ENCODE measurements at regions of chr22 and their contacts with region 1.

Region 1: DNA sequence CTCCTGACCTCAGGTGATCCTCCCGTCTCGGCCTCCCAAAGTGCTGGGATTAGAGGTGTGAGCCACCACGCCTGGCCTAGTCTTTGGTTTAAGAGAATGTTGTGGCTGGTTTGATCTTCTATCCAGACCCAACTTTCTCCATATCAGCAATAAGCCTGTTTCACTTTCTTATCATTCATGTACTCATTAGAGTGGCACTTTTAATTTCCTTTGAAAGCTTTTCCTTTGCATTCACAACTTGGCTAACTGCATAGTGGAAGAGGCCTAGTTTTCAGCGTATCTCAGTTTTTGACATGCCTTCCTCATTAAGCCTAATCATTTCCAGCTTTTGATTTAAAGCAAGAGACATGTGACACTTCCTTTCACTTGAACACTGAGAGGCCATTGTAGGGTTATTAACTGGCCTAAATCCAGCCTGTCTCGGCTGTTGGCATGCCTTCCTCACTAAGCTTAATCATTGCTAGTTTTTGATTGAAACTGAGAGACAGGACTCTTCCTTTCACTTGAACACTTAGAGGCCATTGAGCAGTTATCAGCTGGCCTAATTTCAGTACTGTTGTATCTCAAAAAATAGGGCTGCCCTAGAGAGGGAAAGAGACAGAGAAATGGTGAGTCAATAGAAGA is 13.1 kb upstream of the RPL3 start:
- DNase-seq: peak; percentile 84
- H3K4me3 ChIP-seq: no peak overlapping the region
- H3K27ac ChIP-seq: peak overlapping the region; percentile 74
- H3K4me1 ChIP-seq: peaks cover 13% of the 10 kb centered on the region
- H3K27me3 ChIP-seq: no peaks in the 10 kb centered on the region
- CTCF ChIP-seq: no peak

Region 2: DNA sequence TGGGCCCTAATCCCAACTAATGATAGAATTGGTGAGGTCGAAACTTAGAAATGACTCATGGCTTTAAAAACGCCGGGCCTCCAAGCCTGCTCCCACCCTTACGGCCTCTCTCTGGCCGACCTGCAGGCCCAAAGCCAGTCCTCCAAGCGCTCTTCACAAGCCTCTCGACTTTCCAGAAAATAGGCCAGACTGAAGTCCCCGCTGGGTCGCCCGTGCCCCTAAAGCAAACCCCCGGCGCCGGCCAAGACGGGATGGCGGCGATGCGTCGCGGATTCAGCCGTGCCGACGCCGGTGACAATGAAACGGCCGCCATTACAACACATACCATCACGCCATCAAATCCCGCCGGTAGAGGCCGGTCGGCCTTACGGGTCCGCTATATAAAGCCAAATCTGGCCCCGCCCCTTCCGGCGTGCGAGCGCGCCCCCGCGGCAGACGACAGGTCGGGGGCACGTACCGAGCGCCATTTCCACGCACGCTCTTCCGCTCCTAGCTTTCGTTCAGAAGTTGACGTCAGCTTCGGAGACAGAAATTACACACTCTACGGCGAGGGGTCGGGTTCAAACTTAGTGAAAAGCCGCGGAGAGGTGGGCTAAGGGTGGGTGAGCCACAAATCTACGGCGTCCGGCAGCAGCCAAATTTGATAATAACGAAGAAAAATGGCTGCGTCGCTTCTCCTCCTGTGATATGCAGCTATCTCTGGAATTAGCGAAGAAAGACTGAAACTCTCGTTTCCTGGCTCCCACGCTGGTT is 13.1 kb before region 1 on chr22 and contains the start of gene RPL3:
- CTCF ChIA-PET with region 1: interaction called, 6 read pairs
- POLR2A ChIA-PET with region 1: interaction called, 10 read pairs
- intact Hi-C with region 1: no loop called
- DNase-seq: peak; percentile 100
- H3K4me3 ChIP-seq: peak within 1 kb of the TSS; percentile 87
- H3K27ac ChIP-seq: peak within 1 kb of the TSS; percentile 98
- H3K4me1 ChIP-seq: peaks cover 30% of the 10 kb centered on the region
- H3K27me3 ChIP-seq: no peaks in the 10 kb centered on the region
- CTCF ChIP-seq: 0 out of 2 replicates have a peak, but pooled peaks have one; percentile 18
- total RNA-seq, gene RPL3: 1,117 and 1,141 TPM in 2 replicates

Region 3: GRCh38 chr22:39343259-39344048 is 10.9 kb after region 1 on chr22:
- CTCF ChIA-PET with region 1: interaction called, 13 read pairs
- POLR2A ChIA-PET with region 1: no interaction called
- intact Hi-C with region 1: no loop called
- DNase-seq: peak; percentile 78
- H3K4me3 ChIP-seq: no peak overlapping the region
- H3K27ac ChIP-seq: no peak overlapping the region
- H3K4me1 ChIP-seq: peaks cover 6% of the 10 kb centered on the region
- H3K27me3 ChIP-seq: no peaks in the 10 kb centered on the region
- CTCF ChIP-seq: peak; percentile 84